Naive thymus-derived CD4-positive, alpha-beta T cell (primary cell): ENCODE measurements at regions of chr6 and their contacts with region 1.

Region 1: GRCh38 chr6:131602781-131603312 is 25.2 kb downstream of the MED23 start:
- DNase-seq: no peak
- ATAC-seq: no peak
- H3K4me3 ChIP-seq: no peak overlapping the region
- H3K4me3 Mint-ChIP-seq: no peak overlapping the region
- H3K27ac ChIP-seq: no peak overlapping the region
- H3K27ac Mint-ChIP-seq: peak overlapping the region in 1 of 9 donors; percentile 3
- H3K4me1 ChIP-seq: no peaks in the 10 kb centered on the region
- H3K4me1 Mint-ChIP-seq: peaks cover 0 to 2% (median 0%) of the 10 kb centered on the region in 7 donors
- H3K27me3 ChIP-seq: no peaks in the 10 kb centered on the region
- H3K27me3 Mint-ChIP-seq: no peaks in the 10 kb centered on the region

Region 2: DNA sequence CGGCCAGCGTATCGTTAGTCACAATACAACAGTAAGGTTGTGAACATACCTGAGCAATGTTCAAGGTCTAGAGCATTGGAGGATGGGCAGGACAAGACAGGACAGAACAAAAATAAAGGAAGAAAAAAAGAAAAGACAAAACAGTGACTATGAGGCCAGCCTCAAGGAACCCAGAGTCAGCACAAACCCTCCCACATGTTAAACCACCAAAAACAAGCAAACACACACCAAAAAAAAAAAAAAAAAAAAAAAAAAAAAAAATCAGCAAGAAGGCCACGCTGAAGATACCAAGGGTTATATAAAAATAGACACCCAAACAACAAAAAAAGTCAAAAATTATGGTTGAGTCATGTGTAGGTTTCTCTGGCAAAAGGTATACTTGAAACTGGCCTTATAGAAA is 12.4 kb after region 1 on chr6:
- CTCF ChIA-PET with region 1: no interaction called
- POLR2A ChIA-PET with region 1: no interaction called
- intact Hi-C with region 1: loop called in 1 of 2 experiments (anchors 2 kb)
- DNase-seq: no peak
- ATAC-seq: no peak
- H3K4me3 ChIP-seq: no peak overlapping the region
- H3K4me3 Mint-ChIP-seq: no peak overlapping the region
- H3K27ac ChIP-seq: no peak overlapping the region
- H3K27ac Mint-ChIP-seq: peak overlapping the region in 1 of 9 donors; percentile 23
- H3K4me1 ChIP-seq: no peaks in the 10 kb centered on the region
- H3K4me1 Mint-ChIP-seq: peaks cover 0 to 8% (median 2%) of the 10 kb centered on the region in 7 donors
- H3K27me3 ChIP-seq: no peaks in the 10 kb centered on the region
- H3K27me3 Mint-ChIP-seq: no peaks in the 10 kb centered on the region